ENCODE measurements at regions of chr15 and their contacts with region 1.

Region 1: GRCh38 chr15:51536965-51537574 is 85.5 kb downstream of the DMXL2 start:
- DNase-seq: peak; percentile 10
- ATAC-seq: peak; percentile 61; the same call in 1 of the 2 replicates
- H3K4me3 ChIP-seq: no peak overlapping the region
- H3K27ac ChIP-seq: no peak overlapping the region
- H3K4me1 ChIP-seq: no peaks in the 10 kb centered on the region
- H3K27me3 ChIP-seq: no peaks in the 10 kb centered on the region
- CTCF ChIP-seq: peak; percentile 27 to 75 (median 65); a peak in 5 of 6 replicates
- POLR2A ChIP-seq: no peak
- RAD21 ChIP-seq: peak; percentile 48

Region 2: GRCh38 chr15:51547656-51548055 is 10.6 kb after region 1 on chr15:
- CTCF ChIA-PET with region 1: interaction called, 18 read pairs
- POLR2A ChIA-PET with region 1: no interaction called
- RAD21 ChIA-PET with region 1: no interaction called
- intact Hi-C with region 1: no loop called
- DNase-seq: no peak
- ATAC-seq: no peak
- H3K4me3 ChIP-seq: no peak overlapping the region
- H3K27ac ChIP-seq: no peak overlapping the region
- H3K4me1 ChIP-seq: no peaks in the 10 kb centered on the region
- H3K27me3 ChIP-seq: no peaks in the 10 kb centered on the region
- CTCF ChIP-seq: no peak
- POLR2A ChIP-seq: no peak
- RAD21 ChIP-seq: no peak

Region 3: DNA sequence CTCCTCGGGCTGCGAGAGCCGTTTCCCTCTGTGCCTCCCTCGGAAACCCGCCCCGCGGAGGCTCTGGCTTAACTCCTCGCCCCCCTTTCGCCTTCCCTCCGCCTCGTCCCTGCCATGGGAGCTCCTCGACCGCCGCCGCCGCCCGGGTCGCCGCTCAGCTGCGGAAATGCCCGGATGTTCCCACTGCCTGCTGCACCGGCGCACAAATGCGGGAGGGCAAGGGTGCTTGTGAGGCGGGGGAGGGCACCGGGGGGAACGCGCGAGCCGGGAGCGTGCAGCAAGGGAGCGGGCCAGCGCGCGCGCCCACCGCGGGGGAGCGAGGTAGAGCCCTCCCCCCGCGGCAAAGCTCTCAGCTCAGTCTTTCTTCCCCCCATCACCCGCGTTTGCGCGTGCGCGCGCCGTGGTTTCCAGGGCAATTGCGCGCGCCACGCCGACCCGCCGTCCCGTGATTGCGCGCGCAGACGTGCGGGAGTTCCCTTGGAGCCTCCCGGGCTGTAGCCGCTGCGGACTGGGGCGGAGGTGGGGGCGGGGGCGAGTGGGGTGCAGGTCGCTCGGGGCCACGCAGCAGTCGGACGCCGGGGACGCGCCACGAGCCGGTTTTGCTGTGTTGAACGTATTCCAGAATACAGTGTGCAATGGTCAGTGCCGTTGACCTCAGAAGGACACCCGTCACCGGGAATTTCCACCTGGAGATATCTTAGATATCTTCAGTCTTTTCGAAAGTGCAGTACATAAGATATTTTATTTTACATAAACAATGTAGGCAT is 85.7 kb after region 1 on chr15 and contains the start of gene DMXL2:
- CTCF ChIA-PET with region 1: interaction called, 7 read pairs
- POLR2A ChIA-PET with region 1: no interaction called
- RAD21 ChIA-PET with region 1: no interaction called
- intact Hi-C with region 1: loop called (anchors 2 kb)
- DNase-seq: peak; percentile 65
- ATAC-seq: peak; percentile 83
- H3K4me3 ChIP-seq: peak within 1 kb of the TSS; percentile 81 to 83
- H3K27ac ChIP-seq: peak within 1 kb of the TSS; percentile 91
- H3K4me1 ChIP-seq: peaks cover 10 to 22% of the 10 kb centered on the region in 2 experiments
- H3K27me3 ChIP-seq: no peaks in the 10 kb centered on the region
- CTCF ChIP-seq: no peak
- POLR2A ChIP-seq: no peak
- RAD21 ChIP-seq: no peak
- total RNA-seq, gene DMXL2: 21.5 TPM